Activated CD4-positive, alpha-beta memory T cell treated with anti-CD3 and anti-CD28 coated beads, Interleukin-2, amount 10 ng/mL, durations not matched to agents 7 days and 5 days (primary cell): ENCODE measurements at regions of chr6 and their contacts with region 1.

Region 1: GRCh38 chr6:33317669-33318425 is at the start of gene ZBTB22:
- DNase-seq: peak; percentile 97
- H3K4me3 Mint-ChIP-seq: peak within 1 kb of the TSS; percentile 87
- H3K27ac Mint-ChIP-seq: peak within 1 kb of the TSS; percentile 95
- H3K4me1 Mint-ChIP-seq: peaks cover 79% of the 10 kb centered on the region
- H3K27me3 Mint-ChIP-seq: no peaks in the 10 kb centered on the region
- total RNA-seq, gene ZBTB22: 16.5 to 18.0 TPM

Region 2: DNA sequence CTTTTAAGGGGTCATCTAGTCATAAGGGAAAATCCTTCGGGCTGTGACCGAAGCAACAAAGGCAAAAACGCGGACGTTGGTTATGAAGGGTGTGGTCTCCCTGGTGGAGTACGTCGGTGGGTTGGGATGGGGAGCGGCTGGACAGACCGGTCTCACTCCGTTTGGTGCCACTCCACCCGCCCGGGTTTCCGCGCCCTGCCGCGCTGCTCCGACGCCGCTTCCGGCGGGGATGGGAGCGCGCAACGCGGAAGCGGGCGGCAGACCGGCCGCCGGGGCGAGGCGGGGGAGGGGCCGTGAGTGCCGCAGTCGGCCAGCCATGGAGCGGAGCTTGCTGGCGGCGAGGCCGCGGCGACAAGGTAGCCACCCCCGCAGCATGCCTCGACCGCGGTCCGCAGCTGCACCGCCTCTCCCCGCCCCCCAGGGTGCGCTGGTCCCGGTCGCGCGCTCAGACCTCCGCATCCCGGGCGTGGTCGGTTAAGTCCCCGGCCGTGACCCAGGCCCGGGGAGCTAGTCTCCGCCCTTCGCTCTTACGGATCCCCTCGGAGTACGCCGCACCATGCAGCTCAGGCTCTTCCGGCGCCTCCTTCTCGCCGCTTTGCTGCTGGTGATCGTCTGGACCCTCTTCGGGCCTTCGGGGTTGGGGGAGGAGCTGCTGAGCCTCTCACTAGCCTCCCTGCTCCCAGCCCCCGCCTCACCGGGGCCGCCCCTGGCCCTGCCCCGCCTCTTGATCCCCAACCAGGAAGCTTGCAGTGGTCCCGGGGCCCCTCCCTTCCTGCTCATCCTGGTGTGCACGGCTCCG is 40.8 kb before region 1 on chr6 and contains the start of gene B3GALT4:
- CTCF ChIA-PET with region 1: interaction called, 7 read pairs
- POLR2A ChIA-PET with region 1: interaction called, 36 read pairs
- DNase-seq: peak; percentile 79
- H3K4me3 Mint-ChIP-seq: peak within 1 kb of the TSS; percentile 92
- H3K27ac Mint-ChIP-seq: peak within 1 kb of the TSS; percentile 98
- H3K4me1 Mint-ChIP-seq: peaks cover 70% of the 10 kb centered on the region
- H3K27me3 Mint-ChIP-seq: no peaks in the 10 kb centered on the region
- total RNA-seq, gene B3GALT4: 25.2 to 26.5 TPM

Region 3: GRCh38 chr6:33288921-33289748 is 28.7 kb before region 1 on chr6 and contains the starts of genes PFDN6 and WDR46:
- CTCF ChIA-PET with region 1: interaction called, 3 read pairs
- POLR2A ChIA-PET with region 1: interaction called, 21 read pairs
- DNase-seq: peak; percentile 87
- H3K4me3 Mint-ChIP-seq: peak within 1 kb of the TSS; percentile 90
- H3K27ac Mint-ChIP-seq: peak within 1 kb of the TSS; percentile 80
- H3K4me1 Mint-ChIP-seq: peaks cover 47% of the 10 kb centered on the region
- H3K27me3 Mint-ChIP-seq: no peaks in the 10 kb centered on the region
- total RNA-seq, gene PFDN6: 63.5 to 65.0 TPM
- total RNA-seq, gene WDR46: 37.5 to 41.7 TPM

Region 4: DNA sequence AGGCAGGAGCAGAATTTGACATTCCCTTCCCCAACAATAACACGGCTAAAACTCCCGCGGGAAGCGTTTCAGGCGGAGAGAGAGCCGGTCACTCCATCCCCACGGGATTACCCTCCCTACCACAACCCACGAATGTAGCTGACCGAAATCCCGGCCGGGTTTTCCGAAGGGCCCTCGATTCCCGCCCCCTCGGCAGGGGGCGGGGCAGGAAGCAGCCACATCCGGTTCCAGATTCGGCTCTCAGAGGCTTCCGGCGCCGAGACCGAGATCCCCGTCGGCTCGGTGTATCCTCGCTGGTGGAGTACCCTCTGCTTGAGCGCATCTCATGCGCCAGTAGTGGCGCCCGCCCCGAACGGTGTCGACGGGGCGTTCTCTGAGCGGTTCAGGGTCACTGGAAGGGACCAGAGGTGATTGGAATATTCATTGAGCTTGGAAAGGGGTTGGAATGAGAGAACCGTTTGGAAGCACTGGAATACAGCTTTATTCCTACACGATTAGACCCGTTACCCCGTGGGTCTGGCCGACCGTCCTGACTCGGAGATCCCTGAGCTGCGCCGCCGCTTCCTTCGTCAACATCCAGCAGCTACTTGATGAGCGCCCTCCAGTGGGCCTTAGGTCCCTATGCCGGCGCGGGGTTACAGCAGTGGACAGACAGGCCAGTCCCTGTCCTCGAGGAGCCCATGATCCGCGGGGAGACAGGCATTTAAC is 18.5 kb before region 1 on chr6:
- CTCF ChIA-PET with region 1: interaction called, 26 read pairs
- POLR2A ChIA-PET with region 1: interaction called, 71 read pairs
- DNase-seq: peak; percentile 94
- H3K4me3 Mint-ChIP-seq: peak overlapping the region; percentile 95
- H3K27ac Mint-ChIP-seq: peak overlapping the region; percentile 100
- H3K4me1 Mint-ChIP-seq: peaks cover 41% of the 10 kb centered on the region
- H3K27me3 Mint-ChIP-seq: no peaks in the 10 kb centered on the region

Region 5: DNA sequence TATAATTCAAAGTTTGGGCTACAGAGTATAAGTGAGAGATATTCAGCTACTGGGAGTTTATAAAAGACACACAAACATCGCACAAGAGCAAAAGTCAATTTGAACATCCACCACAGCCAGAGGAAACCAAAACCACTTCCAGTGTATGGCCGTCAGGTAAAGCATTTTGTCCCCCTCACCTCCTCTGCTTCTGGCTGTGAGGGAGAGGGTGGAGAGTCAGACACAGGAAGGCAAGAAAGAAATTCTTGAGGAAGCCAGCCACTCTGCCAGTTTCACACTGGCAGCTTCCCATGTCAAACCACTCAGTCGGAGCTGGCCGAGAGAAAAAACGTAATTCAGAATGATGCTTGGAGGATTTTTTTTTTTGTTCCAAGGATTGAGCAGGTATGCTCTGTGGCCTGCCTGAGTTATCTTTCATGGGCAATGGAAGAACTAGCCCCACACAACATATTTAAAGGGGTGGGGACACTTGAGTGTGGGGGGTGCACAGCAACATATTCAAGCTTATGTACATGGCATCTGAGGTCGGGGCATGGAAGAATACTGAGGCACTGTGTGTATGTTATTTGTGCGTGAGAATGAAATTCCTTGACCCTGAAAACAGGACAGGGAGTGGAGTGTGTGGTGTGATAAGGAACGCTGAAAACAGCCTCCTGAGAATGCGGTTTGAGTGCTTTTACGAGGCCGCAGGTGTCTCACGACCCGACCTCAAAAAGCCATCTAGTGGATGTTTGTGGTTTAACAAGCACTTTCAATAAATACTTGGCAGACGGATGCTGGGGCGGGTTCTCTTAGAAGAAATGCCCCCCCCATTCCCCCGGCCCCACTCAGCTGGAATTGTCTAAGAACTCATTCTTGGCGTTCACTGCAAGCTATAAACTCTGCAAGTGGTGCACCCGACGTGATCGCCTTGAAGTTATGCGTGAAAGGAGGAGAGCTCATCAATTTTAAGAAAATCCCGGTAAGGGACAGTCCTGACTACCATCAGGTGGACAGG is 27.2 kb after region 1 on chr6:
- CTCF ChIA-PET with region 1: interaction called, 16 read pairs
- POLR2A ChIA-PET with region 1: interaction called, 46 read pairs
- DNase-seq: peak; percentile 79
- H3K4me3 Mint-ChIP-seq: peak overlapping the region; percentile 76
- H3K27ac Mint-ChIP-seq: peak overlapping the region; percentile 97
- H3K4me1 Mint-ChIP-seq: peaks cover 46% of the 10 kb centered on the region
- H3K27me3 Mint-ChIP-seq: peaks cover 2% of the 10 kb centered on the region